ENCODE measurements at regions of chr1 and their contacts with region 1.

Region 1: GRCh38 chr1:12511516-12512468 is 106.2 kb downstream of the DHRS3 start:
- DNase-seq: no peak
- ATAC-seq: no peak
- H3K4me3 Mint-ChIP-seq: peak overlapping the region; percentile 80
- H3K27ac Mint-ChIP-seq: peak overlapping the region; percentile 100
- H3K4me1 Mint-ChIP-seq: peaks cover 53% of the 10 kb centered on the region
- H3K27me3 Mint-ChIP-seq: no peaks in the 10 kb centered on the region

Region 2: GRCh38 chr1:12407050-12407961 is 104.5 kb before region 1 on chr1:
- CTCF ChIA-PET with region 1: interaction called, 15 read pairs
- POLR2A ChIA-PET with region 1: interaction called, 5 read pairs
- DNase-seq: peak; percentile 55
- ATAC-seq: peak; percentile 76
- H3K4me3 Mint-ChIP-seq: no peak overlapping the region
- H3K27ac Mint-ChIP-seq: no peak overlapping the region
- H3K4me1 Mint-ChIP-seq: peaks cover 39% of the 10 kb centered on the region
- H3K27me3 Mint-ChIP-seq: no peaks in the 10 kb centered on the region

Region 3: DNA sequence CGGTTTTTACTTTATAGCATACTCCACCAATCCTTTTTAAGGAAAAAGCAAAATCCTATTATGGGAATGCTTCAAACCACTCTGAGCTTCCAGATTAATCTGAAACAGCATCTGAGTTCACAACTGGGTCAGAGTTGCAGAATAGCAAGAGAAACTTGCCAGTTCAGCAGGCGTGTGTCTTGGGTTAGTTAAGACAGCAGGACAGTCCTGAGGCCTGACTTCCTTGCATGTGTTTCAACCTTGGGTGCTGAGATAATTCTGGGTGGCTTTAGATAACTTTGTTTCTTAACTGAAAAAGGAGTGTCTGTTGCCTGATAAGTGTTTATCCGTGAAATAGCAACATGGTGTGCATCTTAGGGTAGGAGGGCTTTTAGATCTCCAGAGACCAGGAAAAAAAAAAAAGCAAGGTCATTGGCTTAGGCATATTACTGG is 63.0 kb before region 1 on chr1:
- CTCF ChIA-PET with region 1: interaction called, 7 read pairs
- POLR2A ChIA-PET with region 1: interaction called, 30 read pairs
- DNase-seq: no peak
- ATAC-seq: no peak
- H3K4me3 Mint-ChIP-seq: peak overlapping the region; percentile 73
- H3K27ac Mint-ChIP-seq: peak overlapping the region; percentile 98
- H3K4me1 Mint-ChIP-seq: peaks cover 90% of the 10 kb centered on the region
- H3K27me3 Mint-ChIP-seq: no peaks in the 10 kb centered on the region

Region 4: DNA sequence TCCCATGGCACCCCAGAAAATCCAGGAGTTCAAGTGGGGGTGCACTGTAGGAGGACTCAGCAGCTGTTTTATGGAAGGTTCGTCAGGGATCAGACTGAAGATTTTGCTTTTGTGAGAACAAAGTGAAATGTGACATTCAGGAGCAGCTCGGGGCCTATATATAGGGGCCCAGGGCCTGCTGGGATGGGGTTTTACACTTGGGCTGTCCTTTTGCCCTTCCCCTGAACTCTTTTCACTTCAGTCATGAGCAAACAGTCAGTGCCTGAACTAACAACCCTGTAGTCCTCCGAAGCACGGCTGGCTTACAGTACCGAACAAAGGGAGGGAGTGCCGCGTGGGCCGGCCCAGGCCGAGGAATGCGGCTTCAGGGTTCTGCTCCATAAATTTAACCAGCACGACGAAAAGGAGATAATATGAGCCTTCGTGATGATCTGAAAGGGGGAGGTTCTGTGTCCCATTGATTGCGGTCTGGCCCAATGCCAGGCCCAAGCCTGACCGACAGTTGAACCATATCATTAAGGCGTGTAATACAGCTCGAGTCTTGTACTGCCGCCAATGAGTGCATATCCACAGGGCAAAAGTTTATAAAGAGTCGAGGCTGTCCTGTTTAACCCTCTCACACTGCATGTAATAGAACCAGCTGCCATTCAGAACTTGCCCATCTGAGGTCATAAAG is 33.7 kb before region 1 on chr1:
- CTCF ChIA-PET with region 1: interaction called, 16 read pairs
- POLR2A ChIA-PET with region 1: interaction called, 52 read pairs
- DNase-seq: peak; percentile 47
- ATAC-seq: peak; percentile 33
- H3K4me3 Mint-ChIP-seq: peak overlapping the region; percentile 61
- H3K27ac Mint-ChIP-seq: peak overlapping the region; percentile 87
- H3K4me1 Mint-ChIP-seq: peaks cover 92% of the 10 kb centered on the region
- H3K27me3 Mint-ChIP-seq: no peaks in the 10 kb centered on the region

Region 5: GRCh38 chr1:12604114-12604874 is 92.5 kb after region 1 on chr1:
- CTCF ChIA-PET with region 1: interaction called, 14 read pairs
- POLR2A ChIA-PET with region 1: interaction called, 4 read pairs
- DNase-seq: peak; percentile 87
- ATAC-seq: peak; percentile 94
- H3K4me3 Mint-ChIP-seq: peak overlapping the region; percentile 53
- H3K27ac Mint-ChIP-seq: peak overlapping the region; percentile 73
- H3K4me1 Mint-ChIP-seq: peaks cover 78% of the 10 kb centered on the region
- H3K27me3 Mint-ChIP-seq: no peaks in the 10 kb centered on the region